Vagina (tissue), 2 donors: ENCODE measurements at regions of chr22 and their contacts with region 1.

Region 1: DNA sequence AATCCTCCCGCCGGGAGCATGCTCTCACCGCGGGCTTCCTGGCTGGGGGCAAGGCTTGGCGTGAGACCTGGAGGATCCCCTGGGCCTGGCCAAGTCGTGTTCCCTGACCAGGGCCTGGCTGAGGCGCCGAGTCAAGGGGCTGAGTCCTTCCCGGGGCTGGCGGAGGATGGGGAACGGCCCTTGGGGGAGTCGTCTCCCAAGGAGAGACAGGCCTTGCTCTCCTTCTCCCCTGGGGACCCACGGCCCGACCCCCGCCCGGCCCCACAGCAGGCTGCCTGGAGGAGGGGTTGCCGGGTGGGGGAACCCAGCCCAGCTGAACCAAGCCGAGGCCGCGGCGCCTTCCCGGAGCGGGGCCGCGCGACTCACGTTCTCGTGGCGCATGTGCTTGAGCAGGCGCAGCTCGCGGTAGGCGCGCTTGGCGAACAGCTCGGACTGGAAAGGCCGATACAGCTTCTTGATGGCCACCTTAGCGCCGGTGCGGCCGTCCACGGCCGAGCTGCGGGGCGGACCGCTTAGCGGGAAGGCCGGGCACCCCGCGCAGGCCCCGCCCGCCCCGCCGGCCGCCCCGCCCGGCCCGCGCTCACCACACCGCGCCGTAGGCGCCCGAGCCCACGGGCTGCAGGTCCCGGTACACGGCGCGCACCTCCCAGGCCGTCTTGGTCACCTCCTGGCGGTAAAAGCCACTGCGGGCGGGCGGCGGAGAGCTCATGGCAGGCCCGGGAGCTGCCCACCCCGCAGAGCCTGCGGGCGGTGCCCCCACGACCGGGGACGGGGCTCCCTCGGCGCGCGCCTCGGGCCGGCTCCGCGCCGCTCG is 475 bp downstream of the MAPK12 start:
- DNase-seq: no peak
- H3K4me3 ChIP-seq: peak overlapping the region; percentile 49 to 70
- H3K27ac ChIP-seq: peak overlapping the region; percentile 44
- H3K4me1 ChIP-seq: peaks cover 23% of the 10 kb centered on the region
- H3K27me3 ChIP-seq: no peaks in the 10 kb centered on the region
- CTCF ChIP-seq: no peak
- POLR2A ChIP-seq: no peak

Region 2: DNA sequence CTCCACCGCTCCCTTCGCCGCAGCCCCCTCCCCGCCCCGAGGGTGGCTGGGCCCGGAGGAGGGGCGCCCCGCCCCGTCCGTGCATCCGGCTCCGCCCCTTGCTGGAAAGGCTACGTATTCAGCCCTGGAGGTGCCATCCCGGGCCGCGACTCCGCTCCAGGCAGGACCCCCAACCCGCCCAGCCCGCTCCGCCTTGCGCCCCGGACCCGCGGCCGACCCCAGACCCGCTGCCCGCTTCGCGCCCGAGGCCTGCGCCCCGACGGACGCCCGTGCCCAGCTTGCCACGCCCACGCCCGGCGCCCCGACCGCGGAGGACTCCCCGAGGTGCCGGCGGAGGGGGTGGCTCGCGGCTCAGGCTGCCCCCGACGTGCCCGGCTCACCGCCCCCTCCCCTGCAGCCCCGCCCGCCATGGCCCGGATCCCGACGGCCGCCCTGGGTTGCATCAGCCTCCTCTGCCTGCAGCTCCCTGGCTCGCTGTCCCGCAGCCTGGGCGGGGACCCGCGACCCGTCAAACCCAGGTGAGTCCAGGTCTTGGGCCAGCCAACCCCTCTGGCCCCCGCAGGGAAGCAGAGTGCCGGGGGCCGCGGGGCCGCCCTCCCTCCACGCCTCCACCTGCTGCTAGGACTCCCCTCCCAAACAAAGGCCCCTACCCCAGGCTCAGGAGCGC is 220.6 kb after region 1 on chr22 and contains the start of gene ADM2:
- intact Hi-C with region 1: no loop called
- DNase-seq: no peak
- H3K4me3 ChIP-seq: peak within 1 kb of the TSS; percentile 40 to 62
- H3K27ac ChIP-seq: no peak within 1 kb of the TSS
- H3K4me1 ChIP-seq: peaks cover 15% of the 10 kb centered on the region
- H3K27me3 ChIP-seq: peaks cover 19% of the 10 kb centered on the region
- CTCF ChIP-seq: no peak
- POLR2A ChIP-seq: no peak
- total RNA-seq, gene ADM2: not detected

Region 3: GRCh38 chr22:50525390-50526068 is 264.5 kb after region 1 on chr22 and contains the start of gene SCO2:
- intact Hi-C with region 1: loop called (anchors 10 kb)
- DNase-seq: no peak
- H3K4me3 ChIP-seq: peak within 1 kb of the TSS; percentile 61 to 84
- H3K27ac ChIP-seq: peak within 1 kb of the TSS; percentile 92
- H3K4me1 ChIP-seq: peaks cover 48% of the 10 kb centered on the region
- H3K27me3 ChIP-seq: no peaks in the 10 kb centered on the region
- CTCF ChIP-seq: peak in 1 of 3 experiments; percentile 45
- POLR2A ChIP-seq: peak; percentile 45 to 52
- total RNA-seq, gene SCO2: 25.0 TPM